ENCODE measurements at regions of chr17 and their contacts with region 1.

Region 1: DNA sequence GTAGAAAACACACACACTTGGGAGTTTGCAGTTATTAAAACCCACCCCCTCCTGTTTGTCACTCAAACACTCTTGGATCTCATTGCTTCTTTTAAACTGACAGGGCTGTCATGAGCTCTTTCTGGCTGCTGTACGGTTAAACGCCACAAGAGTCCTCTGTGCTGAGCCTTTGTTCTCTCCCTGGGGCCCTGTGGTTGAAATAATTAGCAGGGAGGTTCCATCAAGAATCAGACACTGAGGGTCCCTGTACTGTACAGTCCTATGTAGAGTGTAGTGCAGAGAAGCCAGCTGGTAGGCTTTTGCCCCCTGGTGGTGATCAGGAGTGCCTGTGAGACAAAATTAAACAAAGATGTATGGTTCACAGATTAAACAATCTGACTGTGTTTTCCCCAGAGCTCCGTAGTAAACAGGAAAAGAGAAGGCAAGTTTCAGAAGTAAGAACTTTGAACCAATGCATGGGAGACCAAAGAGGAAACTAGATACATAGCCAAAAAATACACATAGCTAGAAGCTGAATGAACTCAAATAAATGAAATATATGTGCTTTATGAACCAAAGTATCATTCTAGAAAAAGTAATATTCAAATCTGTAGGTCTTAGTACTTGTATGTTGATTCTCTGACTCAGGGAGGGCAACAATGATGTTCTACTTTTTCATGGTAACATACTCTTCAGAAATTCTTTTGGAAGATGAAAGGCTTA is 1.4 kb upstream of the SSH2 start:
- DNase-seq: peak; percentile 44 to 86 (median 67)
- ATAC-seq: peak; percentile 69 to 72 (median 72)
- H3K4me3 ChIP-seq: peak overlapping the region; percentile 92 to 95
- H3K4me3 Mint-ChIP-seq: no peak overlapping the region
- H3K27ac ChIP-seq: peak overlapping the region; percentile 59
- H3K27ac Mint-ChIP-seq: no peak overlapping the region
- H3K4me1 ChIP-seq: peaks cover 17 to 32% of the 10 kb centered on the region in 2 experiments
- H3K4me1 Mint-ChIP-seq: peaks cover 24 to 31% (median 31%) of the 10 kb centered on the region in 3 donors
- H3K27me3 ChIP-seq: no peaks in the 10 kb centered on the region
- H3K27me3 Mint-ChIP-seq: peaks cover 0 to 1% of the 10 kb centered on the region in 2 donors

Region 2: DNA sequence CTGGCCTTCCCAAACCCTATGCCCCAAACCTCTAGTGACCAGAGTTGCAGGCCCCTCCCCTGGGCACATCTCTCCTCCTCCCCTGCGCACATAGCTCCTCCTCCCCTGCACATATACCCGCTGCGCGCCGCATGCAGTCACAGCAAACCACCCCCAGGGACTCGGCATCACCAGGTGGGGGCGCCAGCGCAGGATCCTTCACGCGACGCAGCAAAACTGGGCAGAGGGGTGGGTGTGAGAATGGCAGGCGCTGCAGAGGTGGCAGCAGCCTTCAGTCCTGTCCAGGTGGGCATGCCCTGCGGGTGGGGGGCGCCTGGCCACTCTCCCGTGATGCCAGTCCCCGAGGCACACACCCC is 314.3 kb before region 1 on chr17:
- CTCF ChIA-PET with region 1: interaction called in 1 of 2 experiments, 22 read pairs
- POLR2A ChIA-PET with region 1: interaction called in 1 of 2 experiments, 4 read pairs
- DNase-seq: peak; percentile 77 to 94 (median 87)
- ATAC-seq: peak; percentile 57 to 67 (median 62)
- H3K4me3 ChIP-seq: peak overlapping the region; percentile 53 to 57
- H3K4me3 Mint-ChIP-seq: peak overlapping the region; percentile 78 to 89 (median 87)
- H3K27ac ChIP-seq: no peak overlapping the region
- H3K27ac Mint-ChIP-seq: peak overlapping the region; percentile 36 to 69
- H3K4me1 ChIP-seq: peaks cover 30 to 64% of the 10 kb centered on the region in 2 experiments
- H3K4me1 Mint-ChIP-seq: peaks cover 35 to 47% (median 41%) of the 10 kb centered on the region in 3 donors
- H3K27me3 ChIP-seq: peaks cover 0 to 9% of the 10 kb centered on the region in 2 experiments
- H3K27me3 Mint-ChIP-seq: no peaks in the 10 kb centered on the region

Region 3: DNA sequence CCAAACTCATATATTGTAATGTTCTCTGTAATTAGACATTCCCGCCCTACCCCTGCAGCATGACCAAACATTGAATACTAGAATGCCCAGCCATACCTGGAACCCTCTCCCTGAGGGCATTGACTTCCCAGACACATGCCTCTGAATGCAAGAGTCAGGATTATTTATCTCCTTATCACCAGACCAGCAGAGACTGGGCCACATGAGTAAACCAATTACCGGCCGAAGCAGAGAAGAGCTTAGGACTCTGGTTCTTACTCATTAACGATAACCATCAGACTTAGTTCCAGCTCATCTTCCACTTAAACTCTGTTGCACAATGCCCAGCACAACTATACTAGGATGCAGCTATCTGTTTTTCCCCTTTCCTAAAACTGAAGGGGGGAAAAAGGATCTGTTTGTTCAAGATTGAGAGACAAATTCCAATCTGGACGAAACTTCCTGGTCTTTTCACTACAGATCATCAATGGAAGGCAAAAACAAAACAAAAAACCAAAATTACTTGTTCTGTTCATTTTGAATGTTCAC is 220.4 kb before region 1 on chr17:
- CTCF ChIA-PET with region 1: no interaction called
- POLR2A ChIA-PET with region 1: no interaction called
- DNase-seq: no peak
- ATAC-seq: no peak
- H3K4me3 ChIP-seq: no peak overlapping the region
- H3K4me3 Mint-ChIP-seq: no peak overlapping the region
- H3K27ac ChIP-seq: peak overlapping the region; percentile 14
- H3K27ac Mint-ChIP-seq: peak overlapping the region; percentile 84 to 85
- H3K4me1 ChIP-seq: peaks cover 17 to 22% of the 10 kb centered on the region in 2 experiments
- H3K4me1 Mint-ChIP-seq: peaks cover 73 to 85% (median 74%) of the 10 kb centered on the region in 3 donors
- H3K27me3 ChIP-seq: no peaks in the 10 kb centered on the region
- H3K27me3 Mint-ChIP-seq: no peaks in the 10 kb centered on the region

Region 4: GRCh38 chr17:29807520-29808351 is 123.6 kb before region 1 on chr17:
- CTCF ChIA-PET with region 1: interaction called, 8 to 220 read pairs
- POLR2A ChIA-PET with region 1: interaction called, 6 to 12 read pairs
- DNase-seq: peak; percentile 17 to 82 (median 60)
- ATAC-seq: peak; percentile 73 to 85 (median 78)
- H3K4me3 ChIP-seq: no peak overlapping the region
- H3K4me3 Mint-ChIP-seq: no peak overlapping the region
- H3K27ac ChIP-seq: no peak overlapping the region
- H3K27ac Mint-ChIP-seq: peak overlapping the region in 1 of 2 donors; percentile 2
- H3K4me1 ChIP-seq: peaks cover 12 to 20% of the 10 kb centered on the region in 2 experiments
- H3K4me1 Mint-ChIP-seq: peaks cover 23 to 26% (median 26%) of the 10 kb centered on the region in 3 donors
- H3K27me3 ChIP-seq: no peaks in the 10 kb centered on the region
- H3K27me3 Mint-ChIP-seq: no peaks in the 10 kb centered on the region

Region 5: DNA sequence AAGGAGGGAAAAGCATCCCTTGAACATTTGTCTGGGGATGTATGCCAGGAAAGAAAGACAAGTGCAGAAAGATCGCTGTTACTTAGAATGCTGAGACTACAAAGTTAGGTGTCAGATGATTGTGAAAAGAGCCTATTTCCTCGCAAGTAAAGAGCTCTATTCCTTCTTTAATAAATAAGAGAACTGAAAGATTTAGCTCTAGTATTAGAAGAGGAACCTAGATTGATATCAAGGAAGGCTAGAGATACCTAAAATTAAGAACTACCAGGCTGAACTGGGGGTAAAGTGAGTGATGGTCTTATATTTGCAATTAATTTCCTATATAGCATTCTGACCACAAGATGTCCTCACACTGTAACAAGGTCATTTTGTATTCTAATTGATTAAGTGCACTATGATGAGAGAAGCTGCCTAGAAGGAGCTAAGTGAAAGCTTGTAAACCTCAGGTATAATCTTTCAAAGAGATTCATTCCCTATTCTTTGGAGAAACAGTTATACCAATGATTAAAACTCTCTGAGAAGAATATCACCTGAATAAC is 63.7 kb before region 1 on chr17:
- CTCF ChIA-PET with region 1: interaction called, 7 to 11 read pairs
- POLR2A ChIA-PET with region 1: no interaction called
- DNase-seq: peak in 1 of 35 experiments; percentile 22
- ATAC-seq: no peak
- H3K4me3 ChIP-seq: no peak overlapping the region
- H3K4me3 Mint-ChIP-seq: no peak overlapping the region
- H3K27ac ChIP-seq: no peak overlapping the region
- H3K27ac Mint-ChIP-seq: no peak overlapping the region
- H3K4me1 ChIP-seq: peaks cover 3 to 6% of the 10 kb centered on the region in 2 experiments
- H3K4me1 Mint-ChIP-seq: peaks cover 24 to 46% (median 28%) of the 10 kb centered on the region in 3 donors
- H3K27me3 ChIP-seq: no peaks in the 10 kb centered on the region
- H3K27me3 Mint-ChIP-seq: no peaks in the 10 kb centered on the region

Region 6: DNA sequence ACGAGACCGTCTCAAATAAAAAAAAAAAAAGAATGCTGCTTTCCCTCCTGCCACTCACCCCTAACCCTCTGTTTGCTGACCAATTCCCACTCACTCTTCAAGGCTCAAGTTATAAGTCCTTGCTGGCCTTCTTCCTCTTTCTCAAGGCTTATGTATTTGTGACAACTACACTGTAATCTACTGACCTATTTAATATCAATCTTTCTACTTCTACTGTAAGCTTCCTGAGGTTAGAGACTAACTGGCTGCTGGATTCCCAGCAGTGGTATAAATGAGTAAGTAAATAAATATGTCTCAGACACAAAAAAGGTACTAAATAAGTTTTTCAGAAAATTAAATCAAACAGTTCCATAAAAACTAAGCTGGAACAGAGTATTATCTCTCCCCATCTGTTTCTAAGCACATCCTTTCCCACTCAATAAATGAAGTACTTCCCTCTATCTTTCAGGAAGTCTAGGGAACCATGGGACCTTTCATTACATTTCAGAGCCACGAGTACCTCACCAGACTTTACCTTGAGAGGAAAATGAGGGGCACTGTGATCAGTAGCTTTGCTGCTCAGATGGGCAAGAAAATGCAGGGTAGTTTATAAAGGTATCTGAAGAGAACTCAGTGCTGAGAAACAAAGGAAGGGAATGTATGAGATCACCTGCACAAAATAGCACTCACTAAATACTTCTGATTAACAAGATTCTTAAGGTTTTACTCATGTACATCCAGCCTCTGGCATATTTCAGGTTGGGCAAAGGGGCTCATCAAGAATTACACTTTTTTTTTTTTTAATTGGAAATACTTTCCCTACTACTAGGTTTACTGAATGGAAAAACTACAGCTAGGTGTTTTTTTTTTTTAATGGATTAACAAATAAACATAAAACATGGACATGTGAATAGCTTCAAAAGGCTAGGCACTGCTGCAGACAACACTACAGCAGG is 12.2 kb before region 1 on chr17:
- CTCF ChIA-PET with region 1: interaction called in 1 of 2 experiments, 21 read pairs
- POLR2A ChIA-PET with region 1: interaction called, 3 to 5 read pairs
- DNase-seq: no peak
- ATAC-seq: no peak
- H3K4me3 ChIP-seq: no peak overlapping the region
- H3K4me3 Mint-ChIP-seq: no peak overlapping the region
- H3K27ac ChIP-seq: no peak overlapping the region
- H3K27ac Mint-ChIP-seq: peak overlapping the region in 1 of 2 donors; percentile 40
- H3K4me1 ChIP-seq: no peaks in the 10 kb centered on the region
- H3K4me1 Mint-ChIP-seq: peaks cover 39 to 43% (median 41%) of the 10 kb centered on the region in 3 donors
- H3K27me3 ChIP-seq: no peaks in the 10 kb centered on the region
- H3K27me3 Mint-ChIP-seq: no peaks in the 10 kb centered on the region

Region 7: DNA sequence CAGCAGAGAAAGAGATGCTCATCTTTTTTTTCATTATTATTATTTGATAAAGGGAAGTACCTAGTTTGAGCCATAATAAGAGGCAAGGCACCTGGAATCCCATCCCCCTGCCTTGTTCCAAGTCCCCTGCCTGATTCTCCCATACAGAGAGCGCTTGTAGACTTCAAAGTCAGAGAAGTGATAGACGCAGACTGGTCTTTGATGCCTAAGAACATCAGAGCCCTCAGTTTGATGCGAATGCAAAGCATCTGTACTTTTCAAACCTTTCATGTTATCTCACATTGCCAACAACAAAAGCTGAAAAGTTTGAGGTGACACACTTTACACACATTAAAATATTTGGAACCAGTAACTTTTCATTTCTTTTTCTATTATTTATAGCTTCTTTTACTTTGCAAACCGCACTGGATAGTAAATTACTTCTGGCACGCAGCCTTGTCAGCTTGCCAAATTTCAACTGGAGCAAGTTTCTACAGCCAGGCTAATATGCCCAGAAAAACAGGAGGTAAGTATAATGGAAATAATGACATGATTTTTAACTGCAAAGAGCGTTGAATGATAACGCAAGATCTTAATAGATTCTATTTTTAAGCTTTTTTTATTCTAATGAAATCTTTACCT is 1976.1 kb after region 1 on chr17:
- CTCF ChIA-PET with region 1: no interaction called
- POLR2A ChIA-PET with region 1: interaction called in 1 of 2 experiments, 13 read pairs
- DNase-seq: peak in 10 of 35 experiments; percentile 1 to 41 (median 14)
- ATAC-seq: peak in 1 of 4 experiments; percentile 99
- H3K4me3 ChIP-seq: no peak overlapping the region
- H3K4me3 Mint-ChIP-seq: no peak overlapping the region
- H3K27ac ChIP-seq: no peak overlapping the region
- H3K27ac Mint-ChIP-seq: no peak overlapping the region
- H3K4me1 ChIP-seq: no peaks in the 10 kb centered on the region
- H3K4me1 Mint-ChIP-seq: peaks cover 6 to 8% (median 6%) of the 10 kb centered on the region in 3 donors
- H3K27me3 ChIP-seq: peaks cover 0 to 8% of the 10 kb centered on the region in 2 experiments
- H3K27me3 Mint-ChIP-seq: peaks cover 4 to 16% of the 10 kb centered on the region in 2 donors

Measured in T-cell (primary cell).